Psoas muscle (tissue), 8 donors: ENCODE measurements at regions of chr12 and their contacts with region 1.

Region 1: GRCh38 chr12:93742110-93742934 is 65.1 kb downstream of the CRADD start:
- DNase-seq: peak; percentile 77 to 82
- ATAC-seq: peak; percentile 91 to 92 (median 92)
- H3K4me3 ChIP-seq: peak overlapping the region; percentile 81
- H3K27ac ChIP-seq: peak overlapping the region; percentile 75
- H3K4me1 ChIP-seq: peaks cover 31% of the 10 kb centered on the region
- H3K27me3 ChIP-seq: no peaks in the 10 kb centered on the region
- CTCF ChIP-seq: peak; percentile 58

Region 2: GRCh38 chr12:93502802-93503623 is 239.3 kb before region 1 on chr12:
- intact Hi-C with region 1: loop called in 1 of 2 experiments (anchors 10 kb)
- DNase-seq: no peak
- ATAC-seq: peak in 1 of 4 donors; percentile 58
- H3K4me3 ChIP-seq: no peak overlapping the region
- H3K27ac ChIP-seq: no peak overlapping the region
- H3K4me1 ChIP-seq: no peaks in the 10 kb centered on the region
- H3K27me3 ChIP-seq: no peaks in the 10 kb centered on the region
- CTCF ChIP-seq: peak; percentile 86

Region 3: GRCh38 chr12:93591137-93591868 is 151.0 kb before region 1 on chr12:
- intact Hi-C with region 1: loop called in 1 of 2 experiments (anchors 5 kb)
- DNase-seq: peak; percentile 78 to 88
- ATAC-seq: peak; percentile 88 to 92 (median 88)
- H3K4me3 ChIP-seq: peak overlapping the region; percentile 72
- H3K27ac ChIP-seq: peak overlapping the region; percentile 72
- H3K4me1 ChIP-seq: peaks cover 6% of the 10 kb centered on the region
- H3K27me3 ChIP-seq: no peaks in the 10 kb centered on the region
- CTCF ChIP-seq: no peak

Region 4: DNA sequence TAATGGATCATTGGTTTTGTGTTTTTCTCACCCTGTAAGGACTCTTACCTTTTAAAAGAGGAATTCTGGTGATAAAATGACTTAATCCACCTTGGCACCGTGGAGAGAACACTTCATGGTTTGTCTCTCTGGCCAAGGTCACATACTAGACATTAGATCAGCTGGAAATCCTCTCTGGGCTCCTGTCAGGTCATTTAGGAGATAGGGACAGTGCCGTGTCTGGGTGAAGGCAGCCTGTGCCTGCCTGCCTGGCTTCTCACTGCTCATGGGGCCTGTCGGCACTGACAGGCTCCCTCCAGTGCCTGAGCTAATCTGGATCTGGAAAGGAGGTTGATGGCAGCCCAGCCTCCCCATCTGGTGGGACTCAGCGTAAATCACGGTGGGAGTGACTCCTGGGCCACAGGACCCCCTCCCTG is 59.5 kb before region 1 on chr12:
- intact Hi-C with region 1: loop called in 1 of 2 experiments (anchors 5 kb)
- DNase-seq: peak in 1 of 2 donors; percentile 51
- ATAC-seq: peak; percentile 44 to 62 (median 58)
- H3K4me3 ChIP-seq: peak overlapping the region; percentile 26
- H3K27ac ChIP-seq: peak overlapping the region; percentile 77
- H3K4me1 ChIP-seq: peaks cover 83% of the 10 kb centered on the region
- H3K27me3 ChIP-seq: no peaks in the 10 kb centered on the region
- CTCF ChIP-seq: no peak